OCI-LY7 (cell line): ENCODE measurements at regions of chr9 and their contacts with region 1.

Region 1: GRCh38 chr9:6008169-6008979 is 7.0 kb downstream of the RANBP6 start:
- DNase-seq: peak; percentile 98
- H3K4me3 ChIP-seq: peak overlapping the region; percentile 94
- H3K27ac ChIP-seq: peak overlapping the region; percentile 70
- H3K4me1 ChIP-seq: peaks cover 56% of the 10 kb centered on the region
- CTCF ChIP-seq: no peak

Region 2: GRCh38 chr9:5832543-5833529 is 175.5 kb before region 1 on chr9 and contains the start of gene ERMP1:
- CTCF ChIA-PET with region 1: no interaction called
- POLR2A ChIA-PET with region 1: interaction called, 7 read pairs
- intact Hi-C with region 1: loop called (anchors 1 kb)
- DNase-seq: peak; percentile 88
- H3K4me3 ChIP-seq: peak within 1 kb of the TSS; percentile 89
- H3K27ac ChIP-seq: peak within 1 kb of the TSS; percentile 70
- H3K4me1 ChIP-seq: peaks cover 43% of the 10 kb centered on the region
- CTCF ChIP-seq: peak; percentile 88
- total RNA-seq, gene ERMP1: 7.9 and 11.1 TPM in 2 replicates

Region 3: GRCh38 chr9:5994493-5994892 is 13.9 kb before region 1 on chr9:
- CTCF ChIA-PET with region 1: no interaction called
- POLR2A ChIA-PET with region 1: interaction called, 19 read pairs
- intact Hi-C with region 1: no loop called
- DNase-seq: no peak
- H3K4me3 ChIP-seq: no peak overlapping the region
- H3K27ac ChIP-seq: no peak overlapping the region
- H3K4me1 ChIP-seq: no peaks in the 10 kb centered on the region
- CTCF ChIP-seq: no peak

Region 4: GRCh38 chr9:6024020-6024554 is 15.7 kb after region 1 on chr9:
- CTCF ChIA-PET with region 1: no interaction called
- POLR2A ChIA-PET with region 1: interaction called, 10 read pairs
- intact Hi-C with region 1: no loop called
- DNase-seq: peak; percentile 74
- H3K4me3 ChIP-seq: no peak overlapping the region
- H3K27ac ChIP-seq: no peak overlapping the region
- H3K4me1 ChIP-seq: peaks cover 9% of the 10 kb centered on the region
- CTCF ChIP-seq: peak; percentile 74

Region 5: DNA sequence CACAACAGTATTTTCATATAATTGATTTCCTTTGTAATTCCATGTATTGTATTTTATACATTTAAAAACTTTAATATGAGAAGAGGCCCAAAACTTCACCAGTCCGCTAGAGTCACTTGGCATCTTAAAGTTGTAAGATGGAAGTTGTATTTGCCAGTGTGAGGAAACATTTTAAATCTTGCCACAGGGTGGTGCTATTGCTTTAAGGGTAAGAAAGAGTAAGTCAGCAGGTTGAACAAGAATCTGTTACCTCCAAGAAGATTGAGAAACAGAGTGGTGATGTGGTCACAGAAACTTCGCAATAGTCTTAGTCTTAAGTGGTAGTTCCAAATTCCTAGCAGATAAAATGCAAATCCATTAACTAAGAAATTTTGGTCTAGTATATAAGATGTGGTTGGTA is 46.8 kb after region 1 on chr9:
- CTCF ChIA-PET with region 1: interaction called, 5 read pairs
- POLR2A ChIA-PET with region 1: interaction called, 3 read pairs
- intact Hi-C with region 1: loop called (anchors 1 kb)
- DNase-seq: peak; percentile 77
- H3K4me3 ChIP-seq: no peak overlapping the region
- H3K27ac ChIP-seq: no peak overlapping the region
- H3K4me1 ChIP-seq: peaks cover 17% of the 10 kb centered on the region
- CTCF ChIP-seq: peak; percentile 81

Region 6: GRCh38 chr9:6757456-6758247 is 749.3 kb after region 1 on chr9 and contains the start of gene KDM4C:
- CTCF ChIA-PET with region 1: no interaction called
- POLR2A ChIA-PET with region 1: no interaction called
- intact Hi-C with region 1: loop called (anchors 5 kb)
- DNase-seq: peak; percentile 97
- H3K4me3 ChIP-seq: peak within 1 kb of the TSS; percentile 94
- H3K27ac ChIP-seq: peak within 1 kb of the TSS; percentile 80
- H3K4me1 ChIP-seq: peaks cover 22% of the 10 kb centered on the region
- CTCF ChIP-seq: no peak
- total RNA-seq, gene KDM4C: 51.5 and 57.9 TPM in 2 replicates